IMR-90 (cell line): ENCODE measurements at regions of chr15 and their contacts with region 1.

Region 1: DNA sequence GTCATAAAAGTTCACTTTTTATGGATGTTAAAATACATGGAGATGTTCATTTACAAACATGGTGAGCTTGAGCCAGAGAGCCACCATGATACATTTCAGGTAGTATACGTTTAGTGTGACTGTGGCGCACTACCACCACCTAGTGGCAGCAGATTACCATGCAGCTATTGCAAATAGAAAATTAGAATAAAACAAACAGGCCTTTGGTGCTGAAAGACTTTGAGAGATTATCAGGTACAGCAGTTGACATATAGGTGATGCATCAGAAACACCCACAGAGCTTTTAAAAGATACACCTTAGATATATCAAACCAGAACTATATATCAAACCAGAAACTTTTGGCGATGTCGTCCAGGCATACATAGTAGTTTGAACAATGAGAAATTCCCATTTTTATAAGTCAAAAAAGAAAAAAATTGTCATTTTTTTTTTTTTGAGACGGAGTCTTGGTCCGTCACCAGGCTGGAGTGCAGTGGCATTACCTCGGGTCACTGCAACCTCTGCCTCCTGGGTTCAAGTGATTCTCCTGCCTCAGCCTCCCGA is 42.0 kb upstream of the ICE2 start:
- DNase-seq: peak; percentile 77
- ATAC-seq: peak; percentile 72
- H3K4me3 ChIP-seq: no peak overlapping the region
- H3K27ac ChIP-seq: no peak overlapping the region
- H3K4me1 ChIP-seq: peaks cover 10% of the 10 kb centered on the region; the same call in 1 of the 2 replicates
- H3K27me3 ChIP-seq: no peaks in the 10 kb centered on the region
- CTCF ChIP-seq: peak; percentile 87
- POLR2A ChIP-seq: no peak
- RAD21 ChIP-seq: peak; percentile 83

Region 2: DNA sequence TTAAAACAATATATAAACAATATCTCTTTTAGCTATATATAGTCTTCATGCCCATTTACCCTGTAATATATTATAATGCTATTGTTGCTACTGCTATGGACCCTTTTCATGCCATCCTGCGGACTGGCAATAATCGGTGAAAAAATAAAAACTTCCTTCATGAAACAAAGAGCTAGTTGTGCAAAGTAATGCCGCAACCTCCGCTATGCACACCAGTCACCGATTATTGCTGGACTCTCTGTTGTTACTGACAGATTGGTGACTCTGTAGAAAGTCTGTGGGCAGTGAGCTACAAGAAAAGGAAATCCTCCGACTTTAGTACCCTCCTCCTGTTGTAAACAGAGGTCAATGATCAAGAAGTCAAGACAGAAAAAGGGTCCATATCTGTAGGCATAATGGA is 24.0 kb before region 1 on chr15:
- CTCF ChIA-PET with region 1: interaction called, 11 read pairs
- POLR2A ChIA-PET with region 1: no interaction called
- dilution Hi-C with region 1: no loop called
- in situ Hi-C with region 1: no loop called
- intact Hi-C with region 1: no loop called
- DNase-seq: no peak
- ATAC-seq: no peak
- H3K4me3 ChIP-seq: no peak overlapping the region
- H3K27ac ChIP-seq: no peak overlapping the region
- H3K4me1 ChIP-seq: no peaks in the 10 kb centered on the region
- H3K27me3 ChIP-seq: no peaks in the 10 kb centered on the region
- CTCF ChIP-seq: no peak
- POLR2A ChIP-seq: no peak
- RAD21 ChIP-seq: no peak

Region 3: GRCh38 chr15:60507596-60508424 is 13.1 kb before region 1 on chr15:
- CTCF ChIA-PET with region 1: interaction called, 14 read pairs
- POLR2A ChIA-PET with region 1: no interaction called
- dilution Hi-C with region 1: no loop called
- in situ Hi-C with region 1: no loop called
- intact Hi-C with region 1: no loop called
- DNase-seq: peak; percentile 77
- ATAC-seq: peak; percentile 98
- H3K4me3 ChIP-seq: no peak overlapping the region
- H3K27ac ChIP-seq: no peak overlapping the region
- H3K4me1 ChIP-seq: no peaks in the 10 kb centered on the region
- H3K27me3 ChIP-seq: no peaks in the 10 kb centered on the region
- CTCF ChIP-seq: peak; percentile 95
- POLR2A ChIP-seq: no peak
- RAD21 ChIP-seq: peak; percentile 87

Region 4: DNA sequence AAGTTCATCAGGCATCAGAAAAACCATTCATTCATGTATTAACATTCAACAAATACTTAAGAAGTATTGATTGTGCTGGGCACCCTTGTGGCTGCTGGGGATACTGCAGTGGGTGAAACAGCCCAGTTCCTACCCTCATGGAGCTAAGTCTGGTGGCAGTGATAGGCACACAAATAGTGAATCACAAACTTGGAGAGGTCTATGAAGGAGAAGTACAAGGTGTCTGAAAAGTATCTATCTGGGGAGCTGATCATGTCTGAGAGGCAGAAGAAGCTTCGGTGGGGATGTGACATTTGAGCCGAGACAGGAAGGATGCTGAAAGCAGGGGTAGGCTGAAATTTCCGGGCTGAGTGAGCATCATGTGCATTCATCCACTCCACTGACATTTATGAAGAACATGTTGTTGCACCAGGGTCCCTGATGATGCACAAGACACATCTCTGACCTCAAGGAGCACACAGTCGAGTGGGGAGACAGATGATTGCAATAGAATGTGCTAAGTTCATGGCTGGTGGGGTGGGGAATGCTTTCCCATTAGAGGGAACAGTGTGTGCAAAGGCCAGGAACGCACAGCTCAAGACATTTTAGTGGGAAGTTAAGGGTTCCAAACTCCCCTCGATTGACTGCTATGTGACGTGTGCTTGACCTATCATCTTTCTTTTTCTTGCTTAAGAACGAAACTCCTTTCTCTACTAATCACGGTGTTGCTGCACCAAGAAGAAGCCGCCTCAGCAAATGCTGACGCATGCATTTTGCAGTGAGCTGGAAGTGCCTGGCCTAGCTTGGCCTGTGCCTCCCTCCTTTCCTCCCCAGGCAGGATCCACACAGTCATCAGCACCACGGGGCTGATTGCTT is 267.2 kb after region 1 on chr15:
- CTCF ChIA-PET with region 1: no interaction called
- POLR2A ChIA-PET with region 1: no interaction called
- dilution Hi-C with region 1: no loop called
- in situ Hi-C with region 1: no loop called
- intact Hi-C with region 1: no loop called
- DNase-seq: no peak
- ATAC-seq: peak; percentile 53; the same call in 1 of the 2 replicates
- H3K4me3 ChIP-seq: no peak overlapping the region
- H3K27ac ChIP-seq: no peak overlapping the region
- H3K4me1 ChIP-seq: no peaks in the 10 kb centered on the region
- H3K27me3 ChIP-seq: peaks cover 11% of the 10 kb centered on the region
- CTCF ChIP-seq: peak; percentile 31; the same call in 1 of the 2 replicates
- POLR2A ChIP-seq: no peak
- RAD21 ChIP-seq: peak; percentile 32; the same call in 1 of the 2 replicates